HepG2 (cell line): ENCODE measurements at regions of chr11 and their contacts with region 1.

Region 1: DNA sequence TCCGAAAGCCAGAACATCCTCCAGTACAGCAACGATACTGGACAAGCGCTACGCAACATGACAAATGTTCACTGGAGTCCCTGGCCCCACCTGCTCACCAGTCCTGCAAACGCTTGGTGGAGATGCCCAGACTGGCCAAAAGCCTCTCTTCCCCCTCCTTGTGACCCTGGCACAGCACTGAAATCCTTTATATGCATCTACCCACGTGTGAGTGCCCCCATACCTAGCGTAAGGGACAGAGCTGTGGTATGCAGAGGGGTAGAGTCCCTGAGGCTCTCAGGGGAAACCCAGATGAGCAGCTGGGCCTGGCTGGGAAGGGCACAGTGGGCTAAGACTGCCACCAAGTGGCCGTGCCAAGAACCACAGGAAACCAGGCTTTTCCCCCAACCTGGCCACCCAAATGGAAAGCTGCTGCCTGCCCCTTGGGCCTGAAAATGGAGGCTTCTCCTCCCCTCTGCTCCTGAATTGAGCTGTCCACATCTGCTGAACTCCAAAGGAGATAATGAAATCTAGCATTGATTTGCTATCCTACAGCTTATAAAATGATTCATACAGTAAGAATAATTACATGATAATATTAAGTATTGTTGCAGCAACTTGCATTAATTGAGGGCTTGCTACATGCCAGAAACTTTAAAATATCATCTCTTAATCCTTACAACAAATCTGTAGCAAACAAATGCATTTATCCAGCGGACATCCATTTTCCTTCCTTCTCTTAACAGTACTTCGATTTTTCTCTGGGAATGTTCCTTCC is 24.8 kb upstream of the TTC12 start:
- DNase-seq: peak; percentile 21
- ATAC-seq: peak; percentile 90
- H3K4me3 ChIP-seq: no peak overlapping the region
- H3K27ac ChIP-seq: no peak overlapping the region
- H3K4me1 ChIP-seq: peaks cover 21% of the 10 kb centered on the region
- H3K27me3 ChIP-seq: peaks cover 0 to 3% of the 10 kb centered on the region in 2 experiments; a peak in 1 of 5 replicates
- CTCF ChIP-seq: peak; percentile 97
- EP300 ChIP-seq: no peak
- POLR2A ChIP-seq: no peak
- RAD21 ChIP-seq: peak; percentile 91

Region 2: GRCh38 chr11:112280268-112281126 is 1009.1 kb before region 1 on chr11:
- CTCF ChIA-PET with region 1: no interaction called
- POLR2A ChIA-PET with region 1: no interaction called
- in situ Hi-C with region 1: loop called (anchors 10 kb)
- intact Hi-C with region 1: no loop called
- DNase-seq: peak; percentile 72
- ATAC-seq: peak; percentile 94
- H3K4me3 ChIP-seq: peak overlapping the region; percentile 33 to 62 (median 46); a peak in 5 of 6 replicates
- H3K27ac ChIP-seq: no peak overlapping the region
- H3K4me1 ChIP-seq: peaks cover 23% of the 10 kb centered on the region
- H3K27me3 ChIP-seq: no peaks in the 10 kb centered on the region
- CTCF ChIP-seq: peak; percentile 82
- EP300 ChIP-seq: no peak
- POLR2A ChIP-seq: no peak
- RAD21 ChIP-seq: peak; percentile 51

Region 3: GRCh38 chr11:112588252-112588694 is 701.3 kb before region 1 on chr11:
- CTCF ChIA-PET with region 1: interaction called, 54 read pairs
- POLR2A ChIA-PET with region 1: interaction called, 4 read pairs
- in situ Hi-C with region 1: loop called (anchors 5 kb)
- intact Hi-C with region 1: no loop called
- DNase-seq: peak; percentile 71
- ATAC-seq: peak; percentile 94
- H3K4me3 ChIP-seq: no peak overlapping the region
- H3K27ac ChIP-seq: no peak overlapping the region
- H3K4me1 ChIP-seq: no peaks in the 10 kb centered on the region
- H3K27me3 ChIP-seq: no peaks in the 10 kb centered on the region
- CTCF ChIP-seq: peak; percentile 77
- EP300 ChIP-seq: no peak
- POLR2A ChIP-seq: no peak
- RAD21 ChIP-seq: peak; percentile 71

Region 4: DNA sequence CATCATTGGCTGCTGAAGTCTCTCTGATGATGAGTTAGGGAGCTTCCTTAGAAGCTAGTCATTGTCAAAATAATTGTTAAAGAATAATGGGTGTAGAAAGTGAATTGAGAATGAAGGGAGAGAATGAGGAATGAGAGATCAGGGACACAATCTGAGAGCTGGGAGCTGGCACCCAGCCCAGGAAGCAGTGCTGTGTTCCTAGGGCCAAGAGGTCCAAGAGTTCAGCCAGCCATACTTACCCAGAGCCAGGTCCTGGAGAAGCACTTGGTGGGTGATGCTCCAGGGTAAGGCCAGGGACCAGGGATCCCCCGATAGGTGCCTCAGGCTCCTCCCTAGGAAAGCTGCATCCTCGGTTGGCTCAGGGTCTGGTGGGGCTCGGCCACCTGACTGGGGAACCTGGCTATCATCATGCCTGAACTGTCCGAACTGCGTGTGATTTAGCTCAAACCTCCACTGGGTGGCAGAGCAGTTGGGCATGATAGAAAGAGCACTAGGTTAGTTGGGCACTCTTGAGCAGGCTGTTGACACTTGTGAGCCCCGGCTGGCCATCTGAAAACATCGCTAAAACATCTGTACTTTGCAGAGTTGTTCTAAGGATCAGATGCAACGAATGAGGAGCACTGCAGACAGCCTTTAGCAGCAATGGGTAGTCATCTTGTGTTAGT is 452.3 kb before region 1 on chr11:
- CTCF ChIA-PET with region 1: no interaction called
- POLR2A ChIA-PET with region 1: no interaction called
- in situ Hi-C with region 1: loop called (anchors 25 kb)
- intact Hi-C with region 1: no loop called
- DNase-seq: no peak
- ATAC-seq: peak; percentile 74
- H3K4me3 ChIP-seq: no peak overlapping the region
- H3K27ac ChIP-seq: no peak overlapping the region
- H3K4me1 ChIP-seq: no peaks in the 10 kb centered on the region
- H3K27me3 ChIP-seq: no peaks in the 10 kb centered on the region
- CTCF ChIP-seq: no peak
- EP300 ChIP-seq: no peak
- POLR2A ChIP-seq: no peak
- RAD21 ChIP-seq: no peak